Activated CD4-positive, alpha-beta memory T cell treated with anti-CD3 and anti-CD28 coated beads for 36 hours (primary cell): ENCODE measurements at regions of chr7 and their contacts with region 1.

Region 1: GRCh38 chr7:92809397-92810241 is 26.8 kb downstream of the CDK6 start:
- DNase-seq: peak; percentile 83
- H3K4me3 Mint-ChIP-seq: peak overlapping the region; percentile 39
- H3K27ac Mint-ChIP-seq: peak overlapping the region; percentile 89
- H3K4me1 Mint-ChIP-seq: peaks cover 73% of the 10 kb centered on the region
- H3K27me3 Mint-ChIP-seq: no peaks in the 10 kb centered on the region

Region 2: DNA sequence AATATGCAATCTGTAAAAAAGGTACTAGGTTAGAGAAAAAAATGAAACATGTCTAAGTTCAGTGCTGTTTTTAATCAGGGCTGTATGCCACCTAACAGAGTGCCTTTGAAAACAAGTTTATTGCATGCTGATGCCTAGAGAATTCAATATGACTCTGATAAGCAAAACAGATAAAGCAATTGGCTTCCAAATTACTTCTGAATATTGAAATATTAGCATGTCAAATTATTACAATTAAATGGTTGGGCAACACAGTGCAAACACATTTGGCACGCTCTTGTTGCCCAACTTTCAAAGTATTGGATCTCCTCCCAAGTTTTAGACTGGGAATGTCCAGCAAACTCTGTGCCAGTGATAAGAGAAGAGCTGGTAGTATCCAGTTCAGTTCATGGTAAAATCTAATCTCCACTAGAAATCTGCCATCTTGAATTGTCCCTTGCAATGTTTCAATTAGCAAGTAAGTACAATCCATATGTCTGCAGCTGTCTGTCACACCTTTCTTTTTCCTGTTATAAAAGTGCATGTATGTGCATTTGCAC is 154.2 kb before region 1 on chr7:
- CTCF ChIA-PET with region 1: no interaction called
- POLR2A ChIA-PET with region 1: no interaction called
- intact Hi-C with region 1: no loop called
- DNase-seq: no peak
- H3K4me3 Mint-ChIP-seq: no peak overlapping the region
- H3K27ac Mint-ChIP-seq: no peak overlapping the region
- H3K4me1 Mint-ChIP-seq: peaks cover 50% of the 10 kb centered on the region
- H3K27me3 Mint-ChIP-seq: no peaks in the 10 kb centered on the region

Region 3: GRCh38 chr7:92751902-92752901 is 57.4 kb before region 1 on chr7:
- CTCF ChIA-PET with region 1: no interaction called
- POLR2A ChIA-PET with region 1: no interaction called
- intact Hi-C with region 1: loop called (anchors 2 kb)
- DNase-seq: no peak
- H3K4me3 Mint-ChIP-seq: no peak overlapping the region
- H3K27ac Mint-ChIP-seq: peak overlapping the region; percentile 72
- H3K4me1 Mint-ChIP-seq: peaks cover 63% of the 10 kb centered on the region
- H3K27me3 Mint-ChIP-seq: no peaks in the 10 kb centered on the region

Region 4: GRCh38 chr7:92797693-92798092 is 11.9 kb before region 1 on chr7:
- CTCF ChIA-PET with region 1: no interaction called
- POLR2A ChIA-PET with region 1: interaction called, 3 read pairs
- intact Hi-C with region 1: loop called (anchors 1 kb)
- DNase-seq: peak; percentile 64
- H3K4me3 Mint-ChIP-seq: no peak overlapping the region
- H3K27ac Mint-ChIP-seq: no peak overlapping the region
- H3K4me1 Mint-ChIP-seq: peaks cover 32% of the 10 kb centered on the region
- H3K27me3 Mint-ChIP-seq: no peaks in the 10 kb centered on the region

Region 5: GRCh38 chr7:92824901-92825480 is 15.4 kb after region 1 on chr7:
- CTCF ChIA-PET with region 1: interaction called, 8 read pairs
- POLR2A ChIA-PET with region 1: interaction called, 9 read pairs
- intact Hi-C with region 1: loop called (anchors 1 kb)
- DNase-seq: no peak
- H3K4me3 Mint-ChIP-seq: peak overlapping the region; percentile 56
- H3K27ac Mint-ChIP-seq: peak overlapping the region; percentile 44
- H3K4me1 Mint-ChIP-seq: peaks cover 75% of the 10 kb centered on the region
- H3K27me3 Mint-ChIP-seq: no peaks in the 10 kb centered on the region

Region 6: GRCh38 chr7:92854501-92855238 is 45.1 kb after region 1 on chr7:
- CTCF ChIA-PET with region 1: no interaction called
- POLR2A ChIA-PET with region 1: no interaction called
- intact Hi-C with region 1: loop called (anchors 2 kb)
- DNase-seq: peak; percentile 46
- H3K4me3 Mint-ChIP-seq: no peak overlapping the region
- H3K27ac Mint-ChIP-seq: peak overlapping the region; percentile 0
- H3K4me1 Mint-ChIP-seq: peaks cover 16% of the 10 kb centered on the region
- H3K27me3 Mint-ChIP-seq: peaks cover 5% of the 10 kb centered on the region